Aorta (tissue), 5 donors: ENCODE measurements at regions of chr1 and their contacts with region 1.

Region 1: DNA sequence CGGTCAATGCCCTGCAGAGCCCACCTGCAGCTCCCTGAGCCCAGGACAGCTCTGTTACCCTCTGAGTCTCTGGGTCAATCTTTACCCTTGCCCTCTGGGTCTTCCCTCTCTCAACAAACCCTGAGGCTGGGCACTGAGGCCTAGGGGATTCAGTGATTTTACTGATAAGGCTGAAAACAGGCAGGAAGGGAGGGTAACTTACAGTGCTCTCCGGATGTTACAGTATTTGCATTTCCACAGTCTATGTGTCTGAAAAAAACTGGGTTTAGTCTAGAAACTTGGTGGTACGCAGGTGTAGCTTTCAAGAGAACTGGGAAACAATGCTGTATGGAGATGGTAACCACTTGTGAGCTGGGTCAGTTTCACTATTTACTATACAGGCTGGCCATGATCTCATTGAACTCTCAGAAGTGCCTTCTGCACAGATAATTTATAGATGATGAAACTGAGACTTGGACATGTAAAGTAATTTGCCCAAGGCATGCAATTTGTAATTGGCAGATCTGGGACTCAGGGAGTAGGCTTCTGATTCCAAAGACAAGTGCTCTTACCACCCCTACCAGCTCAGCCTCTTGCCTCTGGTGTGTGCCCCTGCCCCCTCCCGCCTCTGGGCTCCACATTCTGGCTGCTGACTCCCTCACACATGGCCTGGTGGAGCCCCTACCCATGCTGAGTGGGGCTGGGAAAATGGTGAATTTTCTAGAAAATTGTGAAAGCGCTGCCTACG is 48.8 kb downstream of the TENT5C start:
- DNase-seq: no peak
- ATAC-seq: no peak
- H3K4me3 ChIP-seq: no peak overlapping the region
- H3K27ac ChIP-seq: no peak overlapping the region
- H3K4me1 ChIP-seq: no peaks in the 10 kb centered on the region
- H3K27me3 ChIP-seq: no peaks in the 10 kb centered on the region

Region 2: GRCh38 chr1:117612517-117613248 is 42.0 kb before region 1 on chr1:
- intact Hi-C with region 1: loop called in 1 of 2 experiments (anchors 5 kb)
- DNase-seq: no peak
- ATAC-seq: no peak
- H3K4me3 ChIP-seq: no peak overlapping the region
- H3K27ac ChIP-seq: no peak overlapping the region
- H3K4me1 ChIP-seq: peaks cover 0 to 4% of the 10 kb centered on the region in 2 donors
- H3K27me3 ChIP-seq: no peaks in the 10 kb centered on the region